ENCODE measurements at regions of chr11 and their contacts with region 1.

Region 1: GRCh38 chr11:68206187-68206601 is 6.9 kb downstream of the KMT5B start:
- DNase-seq: no peak
- ATAC-seq: peak; percentile 72
- H3K4me3 Mint-ChIP-seq: no peak overlapping the region
- H3K27ac Mint-ChIP-seq: peak overlapping the region; percentile 31
- H3K4me1 Mint-ChIP-seq: peaks cover 76% of the 10 kb centered on the region
- H3K27me3 Mint-ChIP-seq: no peaks in the 10 kb centered on the region
- CTCF ChIP-seq: peak; percentile 66

Region 2: GRCh38 chr11:68076371-68077042 is 129.7 kb before region 1 on chr11:
- CTCF ChIA-PET with region 1: no interaction called
- POLR2A ChIA-PET with region 1: no interaction called
- intact Hi-C with region 1: loop called (anchors 1 kb)
- DNase-seq: no peak
- ATAC-seq: no peak
- H3K4me3 Mint-ChIP-seq: no peak overlapping the region
- H3K27ac Mint-ChIP-seq: no peak overlapping the region
- H3K4me1 Mint-ChIP-seq: peaks cover 19% of the 10 kb centered on the region
- H3K27me3 Mint-ChIP-seq: no peaks in the 10 kb centered on the region
- CTCF ChIP-seq: no peak

Region 3: GRCh38 chr11:68146704-68147474 is 59.3 kb before region 1 on chr11:
- CTCF ChIA-PET with region 1: no interaction called
- POLR2A ChIA-PET with region 1: no interaction called
- intact Hi-C with region 1: no loop called
- DNase-seq: no peak
- ATAC-seq: no peak
- H3K4me3 Mint-ChIP-seq: no peak overlapping the region
- H3K27ac Mint-ChIP-seq: no peak overlapping the region
- H3K4me1 Mint-ChIP-seq: peaks cover 4% of the 10 kb centered on the region
- H3K27me3 Mint-ChIP-seq: no peaks in the 10 kb centered on the region
- CTCF ChIP-seq: no peak

Region 4: DNA sequence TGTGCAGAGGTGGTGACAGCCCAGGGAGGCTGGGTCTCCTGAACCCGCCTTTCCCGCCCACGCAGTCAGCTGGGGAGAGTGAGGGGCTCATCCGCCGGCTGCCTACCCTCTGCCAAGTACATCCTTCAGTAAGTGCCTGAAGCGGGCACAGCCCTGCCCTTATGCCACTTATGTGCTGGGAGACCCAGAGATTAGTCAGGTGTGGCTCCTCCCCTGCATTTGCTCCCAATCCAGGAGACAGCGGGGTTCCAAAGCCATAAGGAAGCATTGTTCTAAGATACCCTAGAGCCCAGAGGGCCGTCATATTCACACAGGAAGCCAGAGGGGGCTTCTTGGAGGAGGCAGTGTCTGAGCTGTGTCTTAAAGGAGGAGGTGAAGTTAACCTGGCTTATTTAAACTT is 248.6 kb after region 1 on chr11:
- CTCF ChIA-PET with region 1: no interaction called
- POLR2A ChIA-PET with region 1: no interaction called
- intact Hi-C with region 1: no loop called
- DNase-seq: no peak
- ATAC-seq: no peak
- H3K4me3 Mint-ChIP-seq: no peak overlapping the region
- H3K27ac Mint-ChIP-seq: no peak overlapping the region
- H3K4me1 Mint-ChIP-seq: peaks cover 1% of the 10 kb centered on the region
- H3K27me3 Mint-ChIP-seq: no peaks in the 10 kb centered on the region
- CTCF ChIP-seq: no peak

Region 5: DNA sequence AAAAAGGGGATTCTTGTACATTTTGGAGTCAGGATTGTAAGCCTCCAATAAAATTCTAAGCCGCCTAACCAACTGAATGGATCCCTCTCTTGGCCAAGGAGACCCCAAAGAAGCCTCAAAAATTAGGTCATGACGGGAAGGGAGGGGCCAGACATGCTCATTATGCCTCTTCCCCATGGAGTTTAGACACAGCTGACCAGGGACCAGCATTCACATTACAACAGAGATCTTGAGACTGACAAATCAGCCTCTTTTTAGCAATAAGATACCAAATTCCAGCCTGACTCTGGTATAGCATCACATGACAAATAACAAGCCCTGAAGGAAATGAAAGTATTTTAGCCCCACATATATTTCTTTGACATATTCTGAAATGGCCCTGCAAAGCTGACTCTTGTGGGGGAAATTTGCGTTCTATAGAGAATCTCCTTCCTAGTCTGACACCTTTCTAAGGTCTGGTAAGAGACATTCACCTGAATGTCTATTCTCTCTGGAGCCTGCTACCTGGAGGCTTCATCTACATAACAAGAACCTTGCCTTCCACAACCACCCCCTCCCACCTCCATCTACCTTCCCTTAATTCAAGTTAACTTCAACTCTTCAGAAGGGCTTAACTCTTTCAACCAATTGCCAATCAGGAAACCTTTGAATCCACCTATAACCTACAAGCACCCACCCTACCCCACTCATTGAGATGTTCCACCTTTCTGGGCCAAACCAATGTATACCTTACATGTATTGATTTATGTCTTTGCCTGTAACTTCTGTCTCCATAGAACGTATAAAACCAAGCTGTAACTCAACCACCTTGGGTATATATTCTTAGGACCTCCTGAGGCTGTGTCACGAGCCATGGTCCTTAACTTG is 488.5 kb after region 1 on chr11:
- CTCF ChIA-PET with region 1: no interaction called
- POLR2A ChIA-PET with region 1: no interaction called
- intact Hi-C with region 1: no loop called
- DNase-seq: no peak
- ATAC-seq: no peak
- H3K4me3 Mint-ChIP-seq: no peak overlapping the region
- H3K27ac Mint-ChIP-seq: no peak overlapping the region
- H3K4me1 Mint-ChIP-seq: no peaks in the 10 kb centered on the region
- H3K27me3 Mint-ChIP-seq: peaks cover 33% of the 10 kb centered on the region
- CTCF ChIP-seq: no peak

Measured in activated B cell treated with CpG ODN at 0.5 μM for 24 hours (primary cell).